ENCODE measurements at regions of chr1 and their contacts with region 1.

Region 1: GRCh38 chr1:113949007-113949406 is 19.9 kb downstream of the HIPK1 start:
- DNase-seq: peak in 5 of 35 experiments; percentile 13 to 61 (median 20)
- ATAC-seq: no peak
- H3K4me3 ChIP-seq: no peak overlapping the region
- H3K4me3 Mint-ChIP-seq: peak overlapping the region in 1 of 3 donors; percentile 79
- H3K27ac ChIP-seq: peak overlapping the region; percentile 84
- H3K27ac Mint-ChIP-seq: peak overlapping the region; percentile 96 to 99
- H3K4me1 ChIP-seq: peaks cover 46 to 49% of the 10 kb centered on the region in 2 experiments
- H3K4me1 Mint-ChIP-seq: peaks cover 86 to 94% (median 87%) of the 10 kb centered on the region in 3 donors
- H3K27me3 ChIP-seq: no peaks in the 10 kb centered on the region
- H3K27me3 Mint-ChIP-seq: no peaks in the 10 kb centered on the region

Region 2: GRCh38 chr1:113934511-113935055 is 14.4 kb before region 1 on chr1:
- CTCF ChIA-PET with region 1: interaction called, 7 to 86 read pairs
- POLR2A ChIA-PET with region 1: interaction called, 59 to 221 read pairs
- DNase-seq: no peak
- ATAC-seq: no peak
- H3K4me3 ChIP-seq: no peak overlapping the region
- H3K4me3 Mint-ChIP-seq: peak overlapping the region; percentile 22 to 91 (median 89)
- H3K27ac ChIP-seq: peak overlapping the region; percentile 95
- H3K27ac Mint-ChIP-seq: peak overlapping the region; percentile 94 to 99
- H3K4me1 ChIP-seq: peaks cover 52 to 64% of the 10 kb centered on the region in 2 experiments
- H3K4me1 Mint-ChIP-seq: peaks cover 88 to 91% (median 89%) of the 10 kb centered on the region in 3 donors
- H3K27me3 ChIP-seq: no peaks in the 10 kb centered on the region
- H3K27me3 Mint-ChIP-seq: no peaks in the 10 kb centered on the region

Region 3: DNA sequence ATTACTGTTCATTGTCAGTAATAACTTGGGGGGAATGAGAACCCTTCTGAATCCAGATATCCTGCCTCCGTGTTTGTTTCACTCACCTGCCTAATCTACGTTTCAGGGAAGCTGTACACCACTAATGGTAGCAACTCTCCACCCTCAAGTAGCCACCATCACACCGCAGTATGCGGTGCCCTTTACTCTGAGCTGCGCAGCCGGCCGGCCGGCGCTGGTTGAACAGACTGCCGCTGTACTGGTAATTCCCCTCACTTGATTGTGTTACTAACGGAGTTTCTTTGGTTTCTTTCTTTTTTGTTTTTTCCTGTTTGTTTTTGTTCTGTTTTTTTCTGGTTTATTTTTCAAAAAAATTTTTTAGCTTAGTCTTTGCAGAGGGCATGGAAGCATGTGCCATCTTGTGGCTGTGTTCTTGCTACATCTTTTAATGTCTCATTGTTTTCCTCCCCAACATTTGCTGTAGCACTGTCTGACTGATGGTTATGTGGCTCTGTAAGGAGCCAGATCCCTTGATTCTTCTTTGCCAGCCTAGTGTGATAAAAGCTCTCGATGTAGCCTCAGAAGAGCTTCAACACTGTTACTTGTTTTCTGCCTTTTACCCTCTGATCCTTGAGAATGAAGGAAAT is 14.4 kb after region 1 on chr1:
- CTCF ChIA-PET with region 1: interaction called, 7 to 14 read pairs
- POLR2A ChIA-PET with region 1: interaction called, 4 to 6 read pairs
- DNase-seq: peak in 1 of 35 experiments; percentile 46
- ATAC-seq: peak in 1 of 4 experiments; percentile 57
- H3K4me3 ChIP-seq: no peak overlapping the region
- H3K4me3 Mint-ChIP-seq: peak overlapping the region in 2 of 3 donors; percentile 23 to 37
- H3K27ac ChIP-seq: no peak overlapping the region
- H3K27ac Mint-ChIP-seq: peak overlapping the region; percentile 63 to 72
- H3K4me1 ChIP-seq: no peaks in the 10 kb centered on the region
- H3K4me1 Mint-ChIP-seq: peaks cover 13 to 23% (median 13%) of the 10 kb centered on the region in 3 donors
- H3K27me3 ChIP-seq: no peaks in the 10 kb centered on the region
- H3K27me3 Mint-ChIP-seq: no peaks in the 10 kb centered on the region

Region 4: GRCh38 chr1:114236517-114236916 is 287.5 kb after region 1 on chr1:
- CTCF ChIA-PET with region 1: no interaction called
- POLR2A ChIA-PET with region 1: interaction called in 1 of 2 experiments, 22 read pairs
- DNase-seq: no peak
- ATAC-seq: no peak
- H3K4me3 ChIP-seq: no peak overlapping the region
- H3K4me3 Mint-ChIP-seq: no peak overlapping the region
- H3K27ac ChIP-seq: no peak overlapping the region
- H3K27ac Mint-ChIP-seq: no peak overlapping the region
- H3K4me1 ChIP-seq: no peaks in the 10 kb centered on the region
- H3K4me1 Mint-ChIP-seq: peaks cover 7 to 13% (median 12%) of the 10 kb centered on the region in 3 donors
- H3K27me3 ChIP-seq: peaks cover 0 to 7% of the 10 kb centered on the region in 2 experiments
- H3K27me3 Mint-ChIP-seq: no peaks in the 10 kb centered on the region